ENCODE measurements at regions of chr6 and their contacts with region 1.

Region 1: DNA sequence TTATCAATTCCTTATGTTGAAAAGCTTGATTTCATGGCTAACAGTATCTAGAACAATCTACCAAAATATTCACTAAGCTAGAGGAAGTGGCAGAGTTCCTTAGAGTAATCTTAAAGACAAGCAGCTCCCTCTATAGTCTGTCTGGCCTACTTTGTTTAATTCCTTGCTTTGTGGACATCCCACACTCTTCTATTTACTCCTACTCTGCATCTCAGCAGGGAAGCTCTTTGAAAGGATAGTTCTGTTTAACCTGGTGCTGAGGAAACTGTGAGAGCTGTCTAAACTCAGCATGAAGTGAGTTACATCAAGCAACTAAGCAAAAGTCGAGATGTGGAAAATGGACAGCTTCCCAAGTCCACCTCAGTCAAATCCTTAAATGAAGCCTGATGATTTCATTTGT is 4.3 kb downstream of the REV3L start:
- DNase-seq: peak in 2 of 5 donors; percentile 36 to 37
- H3K4me3 ChIP-seq: no peak overlapping the region
- H3K4me3 Mint-ChIP-seq: peak overlapping the region in 2 of 7 donors; percentile 11 to 69
- H3K27ac ChIP-seq: no peak overlapping the region
- H3K27ac Mint-ChIP-seq: peak overlapping the region in 6 of 8 donors; percentile 2 to 76 (median 58)
- H3K4me1 ChIP-seq: peaks cover 17% of the 10 kb centered on the region
- H3K4me1 Mint-ChIP-seq: peaks cover 36 to 54% (median 51%) of the 10 kb centered on the region in 3 donors
- H3K27me3 ChIP-seq: no peaks in the 10 kb centered on the region
- H3K27me3 Mint-ChIP-seq: peaks cover 0 to 2% of the 10 kb centered on the region in 2 donors

Region 2: GRCh38 chr6:111462770-111463391 is 15.9 kb before region 1 on chr6:
- CTCF ChIA-PET with region 1: interaction called, 12 read pairs
- POLR2A ChIA-PET with region 1: no interaction called
- DNase-seq: no peak
- H3K4me3 ChIP-seq: no peak overlapping the region
- H3K4me3 Mint-ChIP-seq: peak overlapping the region in 2 of 7 donors; percentile 1 to 15
- H3K27ac ChIP-seq: no peak overlapping the region
- H3K27ac Mint-ChIP-seq: peak overlapping the region; percentile 1 to 67 (median 18)
- H3K4me1 ChIP-seq: peaks cover 17% of the 10 kb centered on the region
- H3K4me1 Mint-ChIP-seq: peaks cover 34 to 59% (median 49%) of the 10 kb centered on the region in 3 donors
- H3K27me3 ChIP-seq: no peaks in the 10 kb centered on the region
- H3K27me3 Mint-ChIP-seq: no peaks in the 10 kb centered on the region

Region 3: GRCh38 chr6:111494951-111495635 is 16.3 kb after region 1 on chr6:
- CTCF ChIA-PET with region 1: no interaction called
- POLR2A ChIA-PET with region 1: no interaction called
- DNase-seq: no peak
- H3K4me3 ChIP-seq: no peak overlapping the region
- H3K4me3 Mint-ChIP-seq: no peak overlapping the region
- H3K27ac ChIP-seq: no peak overlapping the region
- H3K27ac Mint-ChIP-seq: no peak overlapping the region
- H3K4me1 ChIP-seq: no peaks in the 10 kb centered on the region
- H3K4me1 Mint-ChIP-seq: peaks cover 1 to 23% (median 4%) of the 10 kb centered on the region in 3 donors
- H3K27me3 ChIP-seq: no peaks in the 10 kb centered on the region
- H3K27me3 Mint-ChIP-seq: no peaks in the 10 kb centered on the region

Measured in CD8-positive, alpha-beta memory T cell (primary cell).